ENCODE measurements at regions of chr5 and their contacts with region 1.

Region 1: GRCh38 chr5:136249678-136250266 is 56.8 kb upstream of the SMIM32 start:
- DNase-seq: no peak
- ATAC-seq: no peak
- H3K4me3 ChIP-seq: no peak overlapping the region
- H3K4me3 Mint-ChIP-seq: no peak overlapping the region
- H3K27ac ChIP-seq: no peak overlapping the region
- H3K27ac Mint-ChIP-seq: no peak overlapping the region
- H3K4me1 ChIP-seq: no peaks in the 10 kb centered on the region
- H3K4me1 Mint-ChIP-seq: no peaks in the 10 kb centered on the region
- H3K27me3 ChIP-seq: peaks cover 0 to 2% of the 10 kb centered on the region in 2 donors
- H3K27me3 Mint-ChIP-seq: peaks cover 7 to 17% (median 8%) of the 10 kb centered on the region in 5 donors

Region 2: DNA sequence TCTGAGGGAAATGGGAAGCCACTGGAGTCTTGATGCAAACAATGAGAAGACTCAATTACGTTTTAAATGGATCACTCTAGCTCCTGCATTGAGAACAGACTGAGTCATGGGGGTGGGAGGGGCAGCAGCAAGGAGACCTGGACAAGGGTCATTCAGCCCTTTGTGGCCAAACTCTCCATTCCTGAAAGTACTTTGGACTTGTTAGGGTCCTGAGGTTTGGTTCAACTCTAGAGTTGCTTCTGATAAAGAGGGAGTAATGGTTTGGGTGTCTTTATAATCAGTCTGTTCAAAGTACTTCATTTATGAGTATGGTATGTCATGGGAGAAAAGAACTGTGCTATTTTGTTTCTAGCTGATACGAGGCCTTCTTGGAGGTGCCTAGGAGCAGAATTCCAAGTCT is 10.9 kb after region 1 on chr5:
- CTCF ChIA-PET with region 1: no interaction called
- POLR2A ChIA-PET with region 1: no interaction called
- intact Hi-C with region 1: no loop called
- DNase-seq: no peak
- ATAC-seq: no peak
- H3K4me3 ChIP-seq: no peak overlapping the region
- H3K4me3 Mint-ChIP-seq: no peak overlapping the region
- H3K27ac ChIP-seq: no peak overlapping the region
- H3K27ac Mint-ChIP-seq: no peak overlapping the region
- H3K4me1 ChIP-seq: no peaks in the 10 kb centered on the region
- H3K4me1 Mint-ChIP-seq: no peaks in the 10 kb centered on the region
- H3K27me3 ChIP-seq: no peaks in the 10 kb centered on the region
- H3K27me3 Mint-ChIP-seq: peaks cover 2 to 37% (median 14%) of the 10 kb centered on the region in 5 donors

Region 3: DNA sequence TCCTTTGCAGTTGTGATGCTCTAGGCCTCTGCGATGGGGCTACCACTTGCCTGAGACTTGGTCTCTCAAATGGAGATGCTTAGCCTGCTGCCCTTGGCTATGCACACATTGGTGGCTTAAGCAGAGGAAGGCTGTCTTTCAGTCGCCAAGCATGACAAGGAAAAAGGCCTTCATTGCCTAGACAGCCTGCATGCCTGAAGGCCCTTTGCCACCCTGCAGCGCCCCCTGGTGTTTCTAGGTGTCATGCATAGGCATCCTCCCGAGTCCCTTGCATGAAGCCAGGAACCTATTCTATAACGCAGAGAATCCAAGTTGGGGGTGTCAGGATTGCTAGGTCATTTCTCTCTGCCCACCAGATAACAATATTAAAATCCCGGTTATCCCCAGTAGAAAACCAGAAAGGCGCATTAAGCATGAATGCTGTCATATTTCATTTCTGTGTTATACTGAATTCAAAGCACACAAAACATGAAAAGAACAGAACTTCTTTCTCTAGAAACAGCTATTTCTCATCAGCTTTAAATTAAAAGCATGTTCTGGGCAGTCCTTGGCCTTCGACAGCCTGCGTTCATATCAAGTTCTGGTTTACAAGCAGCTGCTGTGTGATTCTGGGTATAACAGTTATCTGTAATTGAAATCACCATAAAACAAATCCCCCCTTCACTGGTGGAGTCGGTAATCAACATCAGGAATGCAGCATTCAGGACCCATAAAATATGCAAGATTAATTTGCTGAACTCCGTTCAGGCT is 175.2 kb after region 1 on chr5:
- CTCF ChIA-PET with region 1: no interaction called
- POLR2A ChIA-PET with region 1: no interaction called
- intact Hi-C with region 1: loop called in 1 of 2 experiments (anchors 10 kb)
- DNase-seq: peak in 1 of 9 donors; percentile 56
- ATAC-seq: no peak
- H3K4me3 ChIP-seq: no peak overlapping the region
- H3K4me3 Mint-ChIP-seq: no peak overlapping the region
- H3K27ac ChIP-seq: no peak overlapping the region
- H3K27ac Mint-ChIP-seq: no peak overlapping the region
- H3K4me1 ChIP-seq: no peaks in the 10 kb centered on the region
- H3K4me1 Mint-ChIP-seq: no peaks in the 10 kb centered on the region
- H3K27me3 ChIP-seq: no peaks in the 10 kb centered on the region
- H3K27me3 Mint-ChIP-seq: peaks cover 0 to 4% (median 0%) of the 10 kb centered on the region in 5 donors